ENCODE measurements at regions of chr5 and their contacts with region 1.

Region 1: GRCh38 chr5:177128551-177128981 is 5.0 kb upstream of the NSD1 start:
- DNase-seq: peak; percentile 42
- ATAC-seq: no peak

Region 2: GRCh38 chr5:177303121-177303924 is 174.8 kb after region 1 on chr5 and contains the starts of genes PRELID1 and RAB24:
- intact Hi-C with region 1: loop called (anchors 5 kb)
- DNase-seq: peak; percentile 94
- ATAC-seq: peak; percentile 89
- total RNA-seq, gene PRELID1: 50.1 TPM
- total RNA-seq, gene RAB24: 24.4 TPM